Panc1 (cell line): ENCODE measurements at regions of chr7 and their contacts with region 1.

Region 1: GRCh38 chr7:44490351-44491200 is at the start of gene NUDCD3:
- DNase-seq: peak; percentile 74
- ATAC-seq: peak; percentile 99
- H3K4me3 ChIP-seq: peak within 1 kb of the TSS; percentile 74 to 82
- H3K27ac ChIP-seq: peak within 1 kb of the TSS; percentile 96
- H3K4me1 ChIP-seq: peaks cover 22% of the 10 kb centered on the region
- H3K27me3 ChIP-seq: no peaks in the 10 kb centered on the region; the same call in 1 of the 2 replicates
- CTCF ChIP-seq: peak; percentile 33; the same call in 1 of the 2 replicates
- total RNA-seq, gene NUDCD3: 117 TPM

Region 2: GRCh38 chr7:44565097-44565794 is 74.7 kb after region 1 on chr7:
- CTCF ChIA-PET with region 1: interaction called, 13 read pairs
- POLR2A ChIA-PET with region 1: no interaction called
- in situ Hi-C with region 1: no loop called
- intact Hi-C with region 1: loop called (anchors 5 kb)
- DNase-seq: peak; percentile 48
- ATAC-seq: peak; percentile 76
- H3K4me3 ChIP-seq: no peak overlapping the region
- H3K27ac ChIP-seq: no peak overlapping the region
- H3K4me1 ChIP-seq: peaks cover 6% of the 10 kb centered on the region; the same call in 1 of the 2 replicates
- H3K27me3 ChIP-seq: no peaks in the 10 kb centered on the region
- CTCF ChIP-seq: peak; percentile 99

Region 3: GRCh38 chr7:44867073-44867995 is 376.8 kb after region 1 on chr7:
- CTCF ChIA-PET with region 1: no interaction called
- POLR2A ChIA-PET with region 1: no interaction called
- in situ Hi-C with region 1: no loop called
- intact Hi-C with region 1: no loop called
- DNase-seq: peak; percentile 75
- ATAC-seq: peak; percentile 82
- H3K4me3 ChIP-seq: no peak overlapping the region
- H3K27ac ChIP-seq: no peak overlapping the region
- H3K4me1 ChIP-seq: no peaks in the 10 kb centered on the region
- H3K27me3 ChIP-seq: no peaks in the 10 kb centered on the region
- CTCF ChIP-seq: no peak